PC-9 (cell line): ENCODE measurements at regions of chr18 and their contacts with region 1.

Region 1: GRCh38 chr18:29712785-29713184 is 1329.8 kb downstream of the DSC3 start:
- DNase-seq: no peak
- H3K4me3 ChIP-seq: no peak overlapping the region
- H3K27ac ChIP-seq: no peak overlapping the region
- H3K4me1 ChIP-seq: no peaks in the 10 kb centered on the region
- H3K27me3 ChIP-seq: no peaks in the 10 kb centered on the region
- CTCF ChIP-seq: no peak

Region 2: DNA sequence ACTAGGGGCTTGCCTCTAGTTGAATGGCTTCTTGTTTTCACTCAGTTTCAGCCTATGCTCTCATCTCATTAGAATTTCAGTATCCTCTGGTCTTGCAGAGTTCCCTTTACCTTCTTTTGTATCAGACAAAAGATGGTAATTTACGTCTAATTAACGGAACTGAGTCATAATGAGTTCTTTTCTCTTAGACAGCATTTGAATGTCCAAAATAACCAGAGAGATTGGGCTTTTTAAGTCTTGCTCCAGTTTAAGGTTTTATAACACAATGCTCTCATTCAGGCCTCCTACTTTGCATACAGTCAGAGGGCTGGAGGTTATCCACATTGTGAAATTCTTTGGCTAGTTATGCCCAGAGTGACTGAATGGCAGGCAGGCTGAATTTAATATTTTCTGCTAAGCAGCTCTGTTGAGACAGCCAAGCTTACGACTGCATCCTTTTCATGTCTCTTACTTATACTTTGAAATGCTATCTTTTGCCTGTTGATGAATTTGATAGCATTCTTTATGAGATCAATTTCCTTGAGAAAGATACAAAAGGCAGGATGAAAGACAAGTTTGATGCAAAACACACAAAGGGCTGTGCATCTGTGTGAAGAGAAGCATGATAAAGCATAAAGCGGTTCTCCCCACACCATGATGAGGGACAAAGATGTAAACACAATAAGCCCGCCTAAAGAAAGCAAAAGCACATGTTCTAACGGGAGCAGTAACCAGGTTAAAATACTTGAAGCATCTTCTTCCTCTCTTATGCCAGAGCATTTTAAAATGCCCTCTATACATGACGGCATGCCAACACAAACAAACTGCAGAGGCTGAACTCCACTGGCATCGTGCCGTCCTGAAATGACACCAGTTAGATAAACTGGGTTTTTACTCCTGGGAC is 1625.9 kb before region 1 on chr18:
- CTCF ChIA-PET with region 1: no interaction called
- POLR2A ChIA-PET with region 1: interaction called, 10 read pairs
- intact Hi-C with region 1: no loop called
- DNase-seq: no peak
- H3K4me3 ChIP-seq: no peak overlapping the region
- H3K27ac ChIP-seq: no peak overlapping the region
- H3K4me1 ChIP-seq: no peaks in the 10 kb centered on the region
- H3K27me3 ChIP-seq: no peaks in the 10 kb centered on the region
- CTCF ChIP-seq: no peak